Sciatic nerve (tissue), 2 donors: ENCODE measurements at regions of chr17 and their contacts with region 1.

Region 1: DNA sequence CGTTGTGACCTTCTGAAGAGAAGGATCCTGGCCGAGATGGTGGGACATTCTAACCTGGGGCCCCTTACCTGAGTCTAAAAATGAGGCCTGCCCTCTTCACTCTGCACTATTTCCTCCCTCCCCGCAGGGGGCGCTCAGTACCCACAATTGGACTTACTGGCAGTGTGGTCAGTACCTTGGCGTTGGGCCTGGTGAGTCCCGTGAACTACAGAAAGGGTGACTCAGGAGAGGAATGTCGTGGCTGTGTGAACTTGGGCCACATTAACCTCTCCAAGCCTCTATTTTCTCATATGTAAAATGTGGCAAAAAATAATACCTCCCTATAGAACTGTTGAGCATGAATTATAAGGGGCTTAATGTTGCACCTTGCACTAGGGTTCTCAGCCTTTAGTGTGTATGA is 3.9 kb downstream of the RSAD1 start:
- DNase-seq: peak; percentile 97
- ATAC-seq: peak; percentile 89

Region 2: DNA sequence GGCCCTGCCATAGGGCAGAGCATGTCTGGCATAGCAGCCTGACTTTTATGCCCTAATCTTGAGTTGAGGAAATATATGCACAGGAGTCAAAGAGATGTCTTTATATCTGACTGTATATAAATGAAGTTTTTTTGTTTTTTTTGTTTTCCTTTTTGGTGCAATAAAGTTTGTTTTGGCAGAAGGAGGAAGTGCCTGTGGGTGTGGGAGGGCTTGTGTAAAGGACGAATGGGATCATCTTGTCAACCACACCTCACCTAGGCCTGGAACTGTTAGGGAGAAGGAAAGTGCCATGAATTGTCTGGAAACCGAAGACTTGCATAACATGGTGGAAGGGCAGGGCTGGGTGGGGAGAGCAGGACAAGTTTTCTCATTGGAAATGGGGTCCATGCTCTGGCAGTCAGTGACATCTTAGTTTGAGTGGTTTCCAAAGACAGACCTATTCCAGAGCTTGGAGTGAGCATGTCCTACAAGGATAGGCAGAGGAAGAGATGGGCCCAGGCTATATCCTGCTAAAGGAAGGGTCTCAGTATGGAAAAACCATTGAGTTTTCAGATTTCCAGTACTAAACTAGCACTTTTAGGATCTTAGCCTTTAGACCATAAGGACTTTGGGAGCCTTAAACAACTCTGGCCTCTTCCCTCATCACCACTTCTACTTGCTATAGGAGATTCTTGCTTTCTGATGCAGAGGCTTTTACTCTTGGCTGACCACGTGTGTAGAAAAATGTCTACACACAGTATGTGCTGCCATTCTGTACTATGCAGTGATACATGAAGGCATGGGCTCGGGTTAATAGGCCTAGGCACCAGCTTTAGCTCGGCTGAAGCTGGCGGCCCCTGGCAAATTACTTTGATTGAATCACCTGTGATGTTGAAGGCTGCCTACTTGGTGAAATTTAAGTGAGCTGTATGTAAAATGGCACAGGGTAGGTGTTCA is 1553.4 kb before region 1 on chr17:
- intact Hi-C with region 1: no loop called
- DNase-seq: no peak
- ATAC-seq: no peak

Region 3: GRCh38 chr17:50425682-50426471 is 56.6 kb before region 1 on chr17 and contains the start of gene ACSF2:
- intact Hi-C with region 1: no loop called
- DNase-seq: peak; percentile 84
- ATAC-seq: peak; percentile 80
- total RNA-seq, gene ACSF2: 37.8 TPM

Region 4: GRCh38 chr17:50538549-50539410 is 56.3 kb after region 1 on chr17:
- intact Hi-C with region 1: loop called (anchors 1 kb)
- DNase-seq: no peak
- ATAC-seq: no peak

Region 5: GRCh38 chr17:50613007-50613992 is 130.8 kb after region 1 on chr17:
- intact Hi-C with region 1: loop called (anchors 10 kb)
- DNase-seq: no peak
- ATAC-seq: peak; percentile 40